CD8-positive, alpha-beta memory T cell (primary cell): ENCODE measurements at regions of chr2 and their contacts with region 1.

Region 1: DNA sequence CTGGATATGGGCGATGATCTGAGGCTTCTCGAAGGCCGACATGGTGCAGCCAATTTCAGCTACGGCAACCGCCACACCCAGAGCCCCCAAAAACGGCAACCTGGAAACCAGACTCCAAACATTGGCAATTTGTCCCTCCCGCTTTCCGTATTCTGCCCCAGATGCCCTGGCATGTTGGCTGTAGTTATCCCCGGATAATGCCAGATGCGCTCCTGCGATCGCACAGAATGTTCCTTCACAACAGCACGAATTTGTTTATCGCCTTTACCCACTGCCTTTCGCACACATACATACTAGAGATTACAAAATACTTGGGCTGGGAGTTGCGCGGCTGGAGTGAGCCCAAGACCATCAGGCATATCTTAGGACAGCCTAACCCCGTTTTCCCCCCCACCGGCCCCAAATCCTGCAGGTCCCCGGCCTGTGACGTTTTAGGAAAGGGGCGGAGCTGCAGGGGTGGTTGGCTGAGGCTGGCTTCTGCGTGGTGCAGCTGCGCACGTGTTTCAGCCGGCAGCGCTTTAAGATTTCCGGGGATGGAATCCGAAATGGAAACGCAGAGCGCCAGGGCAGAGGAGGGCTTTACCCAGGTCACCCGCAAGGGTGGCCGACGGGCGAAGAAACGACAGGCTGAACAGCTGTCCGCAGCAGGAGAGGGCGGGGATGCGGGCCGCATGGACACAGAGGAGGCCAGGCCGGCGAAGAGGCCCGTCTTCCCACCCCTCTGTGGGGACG is at the start of gene PNO1:
- DNase-seq: peak; percentile 94 to 98 (median 97)
- H3K4me3 ChIP-seq: peak within 1 kb of the TSS; percentile 88
- H3K4me3 Mint-ChIP-seq: peak within 1 kb of the TSS; percentile 94 to 99 (median 99)
- H3K27ac ChIP-seq: peak within 1 kb of the TSS; percentile 90
- H3K27ac Mint-ChIP-seq: peak within 1 kb of the TSS; percentile 97 to 100 (median 100)
- H3K4me1 ChIP-seq: peaks cover 37% of the 10 kb centered on the region
- H3K4me1 Mint-ChIP-seq: peaks cover 38 to 60% (median 60%) of the 10 kb centered on the region in 3 donors
- H3K27me3 ChIP-seq: no peaks in the 10 kb centered on the region
- H3K27me3 Mint-ChIP-seq: peaks cover 0 to 4% of the 10 kb centered on the region in 2 donors
- total RNA-seq, gene PNO1: 38.1 to 42.0 TPM

Region 2: GRCh38 chr2:66569321-66569851 is 1588.2 kb before region 1 on chr2:
- CTCF ChIA-PET with region 1: no interaction called
- POLR2A ChIA-PET with region 1: no interaction called
- DNase-seq: no peak
- H3K4me3 ChIP-seq: no peak overlapping the region
- H3K4me3 Mint-ChIP-seq: no peak overlapping the region
- H3K27ac ChIP-seq: no peak overlapping the region
- H3K27ac Mint-ChIP-seq: no peak overlapping the region
- H3K4me1 ChIP-seq: no peaks in the 10 kb centered on the region
- H3K4me1 Mint-ChIP-seq: no peaks in the 10 kb centered on the region
- H3K27me3 ChIP-seq: peaks cover 3% of the 10 kb centered on the region
- H3K27me3 Mint-ChIP-seq: peaks cover 4 to 7% of the 10 kb centered on the region in 2 donors

Region 3: DNA sequence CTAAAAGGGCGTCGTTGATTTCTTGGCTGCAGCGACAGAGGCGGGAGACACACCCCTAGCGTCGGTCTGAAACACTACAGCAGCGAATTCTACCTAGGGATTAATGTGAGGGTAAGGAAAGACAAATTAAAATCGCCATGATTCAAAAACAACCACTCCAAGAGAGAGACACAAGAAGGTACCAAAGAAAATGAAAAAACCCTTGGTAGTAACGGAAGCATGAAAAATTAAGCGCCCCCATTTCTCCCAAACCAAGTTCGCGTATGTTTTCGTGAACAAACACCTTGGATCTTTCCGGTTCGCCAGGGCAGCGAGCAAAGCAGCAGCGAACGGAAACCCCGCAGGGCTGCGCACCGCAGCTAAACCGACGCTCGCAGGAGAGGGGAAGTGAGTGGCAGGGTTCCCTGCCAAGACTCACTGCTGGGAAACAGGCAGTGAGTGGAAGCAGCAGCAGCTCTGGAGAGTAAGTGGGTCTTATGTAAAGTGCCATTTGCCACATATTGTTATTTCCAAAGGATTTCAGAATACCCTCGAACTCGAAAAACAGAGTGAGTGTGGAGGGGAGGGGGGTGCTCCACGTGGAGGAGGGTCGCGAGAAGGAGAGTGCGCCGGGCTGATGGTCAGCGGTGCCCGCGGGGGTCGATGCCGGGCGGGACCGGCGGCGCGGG is 93.8 kb after region 1 on chr2:
- CTCF ChIA-PET with region 1: interaction called, 4 read pairs
- POLR2A ChIA-PET with region 1: interaction called, 21 read pairs
- DNase-seq: peak; percentile 60 to 87 (median 80)
- H3K4me3 ChIP-seq: peak overlapping the region; percentile 80
- H3K4me3 Mint-ChIP-seq: peak overlapping the region; percentile 89 to 99 (median 93)
- H3K27ac ChIP-seq: peak overlapping the region; percentile 87
- H3K27ac Mint-ChIP-seq: peak overlapping the region in 5 of 8 donors; percentile 82 to 97 (median 95)
- H3K4me1 ChIP-seq: peaks cover 51% of the 10 kb centered on the region
- H3K4me1 Mint-ChIP-seq: peaks cover 29 to 36% (median 36%) of the 10 kb centered on the region in 3 donors
- H3K27me3 ChIP-seq: no peaks in the 10 kb centered on the region
- H3K27me3 Mint-ChIP-seq: peaks cover 0 to 9% of the 10 kb centered on the region in 2 donors